Activated CD8-positive, alpha-beta T cell treated with anti-CD3 and anti-CD28 coated beads, Interleukin-2, amount 10 ng/mL, durations not matched to agents 7 days and 5 days (primary cell): ENCODE measurements at regions of chr13 and their contacts with region 1.

Region 1: GRCh38 chr13:19984430-19985218 is 26.1 kb downstream of the ZMYM2 start:
- DNase-seq: peak; percentile 25
- ATAC-seq: no peak
- H3K4me3 Mint-ChIP-seq: no peak overlapping the region
- H3K27ac Mint-ChIP-seq: no peak overlapping the region
- H3K4me1 Mint-ChIP-seq: peaks cover 12% of the 10 kb centered on the region
- H3K27me3 Mint-ChIP-seq: no peaks in the 10 kb centered on the region

Region 2: GRCh38 chr13:20001366-20002190 is 17.0 kb after region 1 on chr13:
- CTCF ChIA-PET with region 1: interaction called, 11 read pairs
- POLR2A ChIA-PET with region 1: no interaction called
- DNase-seq: no peak
- ATAC-seq: no peak
- H3K4me3 Mint-ChIP-seq: no peak overlapping the region
- H3K27ac Mint-ChIP-seq: no peak overlapping the region
- H3K4me1 Mint-ChIP-seq: peaks cover 10% of the 10 kb centered on the region
- H3K27me3 Mint-ChIP-seq: no peaks in the 10 kb centered on the region

Region 3: GRCh38 chr13:20080377-20081164 is 95.9 kb after region 1 on chr13:
- CTCF ChIA-PET with region 1: no interaction called
- POLR2A ChIA-PET with region 1: no interaction called
- DNase-seq: no peak
- ATAC-seq: no peak
- H3K4me3 Mint-ChIP-seq: no peak overlapping the region
- H3K27ac Mint-ChIP-seq: peak overlapping the region; percentile 32
- H3K4me1 Mint-ChIP-seq: no peaks in the 10 kb centered on the region
- H3K27me3 Mint-ChIP-seq: no peaks in the 10 kb centered on the region